A673 (cell line): ENCODE measurements at regions of chr7 and their contacts with region 1.

Region 1: DNA sequence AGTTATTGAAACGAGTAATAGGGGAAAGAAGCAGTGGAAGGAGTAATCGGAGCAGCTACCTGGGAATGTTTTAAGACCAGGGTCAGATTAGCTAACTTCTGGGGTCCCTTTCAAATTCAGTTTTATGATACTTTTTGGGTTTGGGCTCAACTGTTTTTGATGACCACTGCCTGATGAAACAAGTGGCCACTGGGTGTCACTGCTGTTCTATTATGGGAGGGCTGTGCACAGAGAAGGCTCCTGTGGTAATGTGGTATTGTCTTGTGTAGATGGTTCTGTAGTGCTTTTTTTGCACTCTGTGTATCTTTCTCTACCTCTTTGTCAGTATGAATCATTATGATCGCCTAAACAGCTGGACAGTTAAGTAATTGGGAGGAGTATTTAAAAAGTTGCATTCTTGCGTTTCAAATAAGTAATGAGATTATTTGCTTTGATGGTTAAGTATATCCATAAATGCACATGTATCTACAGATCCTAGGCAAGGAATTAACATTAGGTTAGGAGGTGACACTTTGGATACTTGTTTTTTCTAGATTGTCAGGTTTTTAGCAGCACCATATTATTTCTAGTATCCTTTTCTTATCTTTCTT is 128.4 kb downstream of the ABCA13 start:
- DNase-seq: peak; percentile 69
- H3K4me3 ChIP-seq: no peak overlapping the region
- H3K27ac ChIP-seq: no peak overlapping the region
- H3K4me1 ChIP-seq: no peaks in the 10 kb centered on the region
- H3K27me3 ChIP-seq: no peaks in the 10 kb centered on the region
- CTCF ChIP-seq: peak; percentile 72

Region 2: DNA sequence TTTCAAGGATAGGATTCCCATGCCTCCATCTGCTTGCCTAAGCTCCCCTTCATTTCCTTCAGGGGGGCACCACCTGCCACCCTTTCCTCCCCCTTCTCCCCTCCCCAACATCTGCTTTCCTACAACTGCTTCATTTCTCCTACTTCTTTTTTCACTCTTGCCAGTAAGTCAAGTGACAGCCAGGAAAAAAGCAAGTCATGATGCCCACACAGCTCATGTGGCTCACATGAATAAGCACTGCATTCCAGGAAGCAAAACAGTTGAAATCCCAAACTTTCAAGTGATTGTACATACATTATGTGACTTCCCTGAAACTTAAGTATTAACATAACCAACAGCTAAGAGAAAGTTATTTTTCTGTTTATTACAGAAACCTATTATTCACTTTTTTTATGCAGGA is 796.4 kb before region 1 on chr7:
- CTCF ChIA-PET with region 1: no interaction called
- POLR2A ChIA-PET with region 1: no interaction called
- intact Hi-C with region 1: no loop called
- DNase-seq: no peak
- H3K4me3 ChIP-seq: no peak overlapping the region
- H3K27ac ChIP-seq: no peak overlapping the region
- H3K4me1 ChIP-seq: no peaks in the 10 kb centered on the region
- H3K27me3 ChIP-seq: no peaks in the 10 kb centered on the region
- CTCF ChIP-seq: no peak

Region 3: GRCh38 chr7:47893247-47893646 is 406.4 kb before region 1 on chr7:
- CTCF ChIA-PET with region 1: interaction called, 14 read pairs
- POLR2A ChIA-PET with region 1: no interaction called
- intact Hi-C with region 1: no loop called
- DNase-seq: peak; percentile 15
- H3K4me3 ChIP-seq: no peak overlapping the region
- H3K27ac ChIP-seq: no peak overlapping the region
- H3K4me1 ChIP-seq: no peaks in the 10 kb centered on the region
- H3K27me3 ChIP-seq: peaks cover 18% of the 10 kb centered on the region
- CTCF ChIP-seq: peak; percentile 56

Region 4: DNA sequence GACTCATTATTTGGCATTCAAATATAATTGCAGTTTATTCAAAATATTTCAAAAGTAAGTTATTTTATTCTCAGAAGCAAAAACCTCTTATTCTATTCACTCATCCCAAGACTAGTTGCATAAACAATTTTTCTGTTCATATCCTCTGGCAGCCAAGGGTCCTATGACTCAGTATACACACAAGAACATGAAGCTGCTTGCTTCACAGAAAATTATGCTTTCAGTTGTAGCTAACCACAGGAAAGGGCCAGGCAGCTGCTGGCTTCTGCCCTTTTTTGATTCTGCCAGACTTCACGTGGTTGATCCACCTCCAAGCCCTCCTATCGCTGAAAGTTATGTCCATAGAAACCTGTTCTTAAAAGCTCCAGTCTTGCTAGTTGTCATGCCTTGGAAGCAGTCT is 19.6 kb before region 1 on chr7:
- CTCF ChIA-PET with region 1: no interaction called
- POLR2A ChIA-PET with region 1: no interaction called
- intact Hi-C with region 1: no loop called
- DNase-seq: no peak
- H3K4me3 ChIP-seq: no peak overlapping the region
- H3K27ac ChIP-seq: no peak overlapping the region
- H3K4me1 ChIP-seq: no peaks in the 10 kb centered on the region
- H3K27me3 ChIP-seq: no peaks in the 10 kb centered on the region
- CTCF ChIP-seq: no peak

Region 5: DNA sequence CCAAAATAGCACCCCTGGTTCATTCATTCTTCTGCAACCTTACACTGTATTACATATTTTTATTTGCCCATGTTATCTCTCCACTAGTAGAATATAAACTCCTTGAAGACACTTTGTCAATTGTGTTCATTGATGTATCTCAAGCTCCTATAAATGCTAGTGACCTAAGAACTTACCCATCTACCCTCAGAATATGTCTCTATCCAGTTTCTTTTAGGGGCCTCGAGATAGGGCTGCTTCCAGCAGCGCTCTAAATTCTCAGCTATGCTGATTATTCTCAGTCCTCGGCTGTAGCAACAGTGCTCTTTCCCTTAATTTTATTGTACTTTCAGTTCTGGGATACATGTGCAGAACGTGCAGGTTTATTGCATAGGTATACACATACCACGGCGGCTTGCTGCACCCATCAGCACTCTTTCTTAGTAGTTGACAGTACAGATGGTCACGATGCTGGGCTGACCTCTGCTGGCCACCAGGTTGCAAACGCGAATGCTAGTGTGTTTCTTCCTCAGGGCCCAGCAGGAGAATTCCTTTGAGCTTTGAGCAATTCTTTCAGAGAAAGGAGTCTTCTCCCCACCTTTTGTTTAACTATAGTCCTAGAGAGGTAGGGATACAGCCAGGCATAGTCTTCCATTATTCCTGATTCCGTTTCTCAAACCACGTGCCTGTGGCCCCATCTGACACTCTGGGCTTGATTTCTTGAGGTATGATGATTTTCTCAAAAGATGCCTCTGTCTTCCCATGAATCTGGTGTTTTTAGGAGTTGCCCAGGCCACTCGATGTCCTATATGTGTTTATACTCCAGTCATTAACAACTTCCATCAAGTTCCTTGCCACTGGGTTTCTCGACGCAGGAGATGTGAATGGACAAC is 575.6 kb after region 1 on chr7:
- CTCF ChIA-PET with region 1: no interaction called
- POLR2A ChIA-PET with region 1: no interaction called
- intact Hi-C with region 1: loop called (anchors 10 kb)
- DNase-seq: peak; percentile 19
- H3K4me3 ChIP-seq: no peak overlapping the region
- H3K27ac ChIP-seq: no peak overlapping the region
- H3K4me1 ChIP-seq: no peaks in the 10 kb centered on the region
- H3K27me3 ChIP-seq: no peaks in the 10 kb centered on the region
- CTCF ChIP-seq: peak; percentile 41

Region 6: GRCh38 chr7:49852619-49853462 is 1553.2 kb after region 1 on chr7:
- CTCF ChIA-PET with region 1: no interaction called
- POLR2A ChIA-PET with region 1: no interaction called
- intact Hi-C with region 1: loop called (anchors 10 kb)
- DNase-seq: peak; percentile 44
- H3K4me3 ChIP-seq: no peak overlapping the region
- H3K27ac ChIP-seq: no peak overlapping the region
- H3K4me1 ChIP-seq: no peaks in the 10 kb centered on the region
- H3K27me3 ChIP-seq: no peaks in the 10 kb centered on the region
- CTCF ChIP-seq: peak; percentile 59